CD4-positive, alpha-beta memory T cell (primary cell): ENCODE measurements at regions of chr7 and their contacts with region 1.

Region 1: DNA sequence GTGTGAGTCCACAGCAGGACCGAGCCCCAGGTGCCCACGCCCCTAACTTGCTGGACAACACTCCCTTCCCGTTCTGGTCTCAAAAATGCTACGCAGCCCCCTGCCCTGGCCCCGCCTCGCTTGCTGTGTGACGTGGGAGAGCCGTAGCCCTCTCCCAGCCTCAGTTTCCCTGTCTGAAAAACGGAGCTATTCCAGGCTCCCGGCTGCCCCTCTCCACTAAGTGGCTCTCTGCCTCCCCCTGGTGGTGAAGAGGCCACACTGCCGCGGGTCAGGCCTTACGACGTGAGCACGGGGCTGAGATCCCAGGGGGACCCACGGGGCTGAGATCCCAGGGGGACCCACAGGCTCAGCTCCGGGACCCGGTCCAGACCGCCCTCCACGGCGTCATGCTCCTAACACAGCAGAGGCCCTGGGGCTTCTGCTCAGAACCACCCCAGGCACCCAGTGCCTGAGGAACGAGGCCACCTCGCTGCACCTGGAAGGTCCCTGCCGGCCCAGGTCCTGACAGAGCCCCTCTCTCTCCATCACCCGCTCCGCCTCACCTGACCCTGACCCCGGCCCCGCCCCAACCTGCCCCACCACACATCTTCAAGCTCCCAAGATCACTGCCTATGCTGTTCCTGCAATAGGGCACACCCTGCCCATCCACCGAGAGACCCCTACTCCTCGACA is 26.7 kb downstream of the MICALL2 start:
- DNase-seq: peak; percentile 61 to 75 (median 69)
- H3K4me3 ChIP-seq: no peak overlapping the region
- H3K4me3 Mint-ChIP-seq: peak overlapping the region in 1 of 8 donors; percentile 36
- H3K27ac ChIP-seq: no peak overlapping the region
- H3K27ac Mint-ChIP-seq: no peak overlapping the region
- H3K4me1 ChIP-seq: peaks cover 4% of the 10 kb centered on the region
- H3K4me1 Mint-ChIP-seq: peaks cover 2 to 6% (median 4%) of the 10 kb centered on the region in 4 donors
- H3K27me3 ChIP-seq: no peaks in the 10 kb centered on the region
- H3K27me3 Mint-ChIP-seq: peaks cover 0 to 3% of the 10 kb centered on the region in 2 donors

Region 2: GRCh38 chr7:1225441-1226185 is 206.9 kb before region 1 on chr7:
- CTCF ChIA-PET with region 1: interaction called, 6 read pairs
- POLR2A ChIA-PET with region 1: no interaction called
- intact Hi-C with region 1: loop called (anchors 1 kb)
- DNase-seq: peak in 3 of 5 donors; percentile 39 to 41 (median 41)
- H3K4me3 ChIP-seq: no peak overlapping the region
- H3K4me3 Mint-ChIP-seq: peak overlapping the region in 2 of 8 donors; percentile 14 to 41
- H3K27ac ChIP-seq: no peak overlapping the region
- H3K27ac Mint-ChIP-seq: peak overlapping the region in 3 of 7 donors; percentile 68 to 86 (median 83)
- H3K4me1 ChIP-seq: no peaks in the 10 kb centered on the region
- H3K4me1 Mint-ChIP-seq: peaks cover 0 to 6% (median 0%) of the 10 kb centered on the region in 4 donors
- H3K27me3 ChIP-seq: peaks cover 56% of the 10 kb centered on the region
- H3K27me3 Mint-ChIP-seq: peaks cover 43 to 53% of the 10 kb centered on the region in 2 donors

Region 3: DNA sequence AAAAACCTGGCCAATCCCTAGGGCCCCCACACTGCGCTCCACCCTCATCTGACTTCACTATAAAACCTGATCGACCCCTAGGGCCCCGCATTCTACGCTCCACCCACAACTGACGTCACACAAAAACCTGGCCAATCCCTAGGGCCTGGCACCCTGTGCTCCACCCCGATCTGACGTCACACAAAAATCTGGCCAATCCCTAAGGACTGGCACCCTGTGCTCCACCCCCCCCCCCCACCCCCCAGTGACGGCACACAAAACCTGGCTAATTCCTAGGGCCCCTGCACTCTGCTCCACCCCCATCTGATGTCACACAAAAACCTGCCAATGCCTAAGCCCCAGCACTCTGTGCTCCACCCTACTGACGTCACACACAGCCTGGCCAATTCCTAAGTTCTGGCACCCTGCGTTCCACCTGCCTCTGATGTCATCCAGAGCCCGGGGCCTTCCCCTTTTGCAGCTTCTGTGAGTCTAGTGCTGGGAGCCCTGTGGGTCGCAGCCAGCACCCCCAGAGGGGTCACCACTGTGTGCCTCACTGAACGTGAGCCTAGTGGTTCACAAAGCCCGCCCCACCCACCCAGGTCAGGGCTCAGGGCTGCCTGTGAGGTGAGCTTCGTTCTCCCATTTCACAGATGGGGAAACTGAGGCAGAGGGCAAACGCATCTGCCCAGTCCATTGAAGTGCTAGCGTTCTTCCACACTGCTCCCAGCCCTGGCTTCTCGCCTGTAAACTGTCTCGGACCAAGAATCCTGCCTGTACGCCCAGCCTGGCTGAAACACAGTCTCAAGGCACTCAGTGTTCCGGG is 13.8 kb before region 1 on chr7:
- CTCF ChIA-PET with region 1: interaction called, 16 read pairs
- POLR2A ChIA-PET with region 1: interaction called, 3 read pairs
- intact Hi-C with region 1: loop called (anchors 1 kb)
- DNase-seq: no peak
- H3K4me3 ChIP-seq: no peak overlapping the region
- H3K4me3 Mint-ChIP-seq: no peak overlapping the region
- H3K27ac ChIP-seq: no peak overlapping the region
- H3K27ac Mint-ChIP-seq: peak overlapping the region in 3 of 7 donors; percentile 5 to 81 (median 70)
- H3K4me1 ChIP-seq: peaks cover 17% of the 10 kb centered on the region
- H3K4me1 Mint-ChIP-seq: peaks cover 14 to 19% (median 18%) of the 10 kb centered on the region in 4 donors
- H3K27me3 ChIP-seq: no peaks in the 10 kb centered on the region
- H3K27me3 Mint-ChIP-seq: peaks cover 3 to 5% of the 10 kb centered on the region in 2 donors

Region 4: DNA sequence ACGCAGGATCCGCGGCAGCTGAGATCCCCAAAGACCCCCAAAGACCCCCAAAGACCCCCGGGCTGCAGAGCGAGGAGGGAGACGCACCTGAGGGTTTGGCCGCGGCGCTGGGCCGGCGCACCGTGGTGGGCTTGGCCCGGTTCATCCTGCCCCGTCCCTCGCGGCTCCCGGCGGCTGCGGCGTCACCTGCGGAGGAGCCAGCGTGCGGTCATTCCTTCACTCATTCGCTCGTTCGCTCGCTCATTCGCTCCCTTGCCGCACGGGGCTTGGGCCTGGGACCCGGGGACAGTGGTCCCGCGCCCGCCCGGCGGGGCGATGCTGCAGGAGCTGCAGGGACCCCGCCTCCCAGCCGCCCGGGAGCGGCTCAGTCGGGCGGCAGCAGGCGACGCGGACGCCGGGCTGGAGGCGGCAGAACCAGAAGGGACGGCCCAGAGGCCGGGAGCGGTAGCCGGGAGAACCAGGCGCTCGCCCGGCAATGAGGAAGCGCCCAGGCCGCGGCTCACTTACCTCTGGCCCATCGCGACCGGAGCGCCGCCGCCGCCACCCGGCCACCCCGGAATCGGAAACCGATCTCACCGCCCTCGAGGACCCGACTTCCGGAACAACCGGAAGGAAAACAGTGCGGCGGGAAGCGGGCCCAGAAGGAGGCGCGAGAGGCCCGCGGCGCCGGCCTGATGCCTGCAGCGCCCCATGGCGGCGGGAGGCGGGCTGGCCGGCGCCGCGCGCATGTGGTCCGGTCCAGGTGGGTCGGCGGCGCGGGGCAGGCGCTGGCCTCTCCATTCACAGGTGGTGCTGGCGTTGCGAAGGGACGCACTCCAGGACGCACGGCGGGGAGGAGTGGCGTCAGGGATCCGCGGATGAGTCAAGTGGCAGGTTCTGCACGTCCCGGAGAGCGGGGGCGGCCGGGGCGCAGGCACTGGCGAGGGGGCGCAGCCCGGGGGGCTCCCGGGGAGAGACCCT is 71.5 kb after region 1 on chr7 and contains the start of gene INTS1:
- CTCF ChIA-PET with region 1: no interaction called
- POLR2A ChIA-PET with region 1: no interaction called
- intact Hi-C with region 1: no loop called
- DNase-seq: peak; percentile 88 to 90 (median 89)
- H3K4me3 ChIP-seq: peak within 1 kb of the TSS; percentile 57 to 89
- H3K4me3 Mint-ChIP-seq: peak within 1 kb of the TSS; percentile 83 to 92 (median 86)
- H3K27ac ChIP-seq: peak within 1 kb of the TSS; percentile 59
- H3K27ac Mint-ChIP-seq: peak within 1 kb of the TSS; percentile 68 to 87 (median 81)
- H3K4me1 ChIP-seq: peaks cover 34% of the 10 kb centered on the region
- H3K4me1 Mint-ChIP-seq: peaks cover 21 to 40% (median 33%) of the 10 kb centered on the region in 4 donors
- H3K27me3 ChIP-seq: no peaks in the 10 kb centered on the region
- H3K27me3 Mint-ChIP-seq: no peaks in the 10 kb centered on the region
- total RNA-seq, gene INTS1: 135 to 137 TPM